ENCODE measurements at regions of chr12 and their contacts with region 1.

Region 1: GRCh38 chr12:2291182-2291832 is 238.5 kb downstream of the CACNA1C start:
- DNase-seq: peak in 6 of 9 donors; percentile 12 to 47 (median 26)
- ATAC-seq: no peak
- H3K4me3 ChIP-seq: no peak overlapping the region
- H3K4me3 Mint-ChIP-seq: peak overlapping the region in 1 of 10 donors; percentile 26
- H3K27ac ChIP-seq: no peak overlapping the region
- H3K27ac Mint-ChIP-seq: no peak overlapping the region
- H3K4me1 ChIP-seq: peaks cover 0 to 5% of the 10 kb centered on the region in 2 donors
- H3K4me1 Mint-ChIP-seq: peaks cover 8 to 16% (median 14%) of the 10 kb centered on the region in 7 donors
- H3K27me3 ChIP-seq: no peaks in the 10 kb centered on the region
- H3K27me3 Mint-ChIP-seq: peaks cover 0 to 25% (median 8%) of the 10 kb centered on the region in 5 donors

Region 2: DNA sequence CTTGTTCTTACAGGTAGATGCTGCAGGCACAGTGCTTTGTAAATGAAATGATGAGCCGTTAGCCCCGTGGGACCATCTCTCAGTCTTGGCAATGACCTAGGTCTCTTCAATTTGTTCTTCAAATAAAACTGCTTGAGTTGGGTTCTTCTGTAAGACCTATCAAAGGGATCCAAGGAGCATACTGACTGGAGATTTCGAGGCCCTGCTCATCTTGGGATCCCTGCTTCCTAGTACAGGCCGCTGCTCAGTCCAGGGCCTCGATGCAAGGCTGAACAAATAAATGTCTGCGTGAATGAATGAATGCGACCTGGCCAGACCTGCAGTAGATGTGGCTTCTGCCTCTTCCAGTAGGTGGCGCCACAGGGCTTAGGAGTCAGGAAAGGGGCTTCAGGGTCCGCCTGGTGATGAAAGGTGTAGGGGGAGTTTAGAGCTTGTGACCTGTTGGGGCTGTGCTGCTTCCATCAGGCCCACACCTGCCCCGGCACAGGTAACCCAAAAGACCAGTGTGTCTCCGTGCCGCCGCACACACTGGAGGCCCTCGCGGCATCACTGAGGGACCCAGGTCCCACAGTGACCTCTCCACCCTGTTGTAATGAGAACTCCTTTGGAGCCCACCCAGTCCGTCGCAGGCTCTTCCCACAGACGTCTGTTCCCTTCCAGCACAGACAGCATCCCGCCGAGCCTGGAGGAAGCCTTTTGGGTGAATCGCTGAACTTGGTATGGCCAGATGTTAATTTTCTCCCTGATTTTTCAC is 234.1 kb before region 1 on chr12:
- CTCF ChIA-PET with region 1: no interaction called
- POLR2A ChIA-PET with region 1: no interaction called
- intact Hi-C with region 1: loop called (anchors 2 to 5 kb)
- DNase-seq: peak in 1 of 9 donors; percentile 34
- ATAC-seq: no peak
- H3K4me3 ChIP-seq: no peak overlapping the region
- H3K4me3 Mint-ChIP-seq: no peak overlapping the region
- H3K27ac ChIP-seq: no peak overlapping the region
- H3K27ac Mint-ChIP-seq: no peak overlapping the region
- H3K4me1 ChIP-seq: no peaks in the 10 kb centered on the region
- H3K4me1 Mint-ChIP-seq: peaks cover 6 to 13% (median 10%) of the 10 kb centered on the region in 7 donors
- H3K27me3 ChIP-seq: no peaks in the 10 kb centered on the region
- H3K27me3 Mint-ChIP-seq: peaks cover 30 to 70% (median 37%) of the 10 kb centered on the region in 5 donors

Region 3: DNA sequence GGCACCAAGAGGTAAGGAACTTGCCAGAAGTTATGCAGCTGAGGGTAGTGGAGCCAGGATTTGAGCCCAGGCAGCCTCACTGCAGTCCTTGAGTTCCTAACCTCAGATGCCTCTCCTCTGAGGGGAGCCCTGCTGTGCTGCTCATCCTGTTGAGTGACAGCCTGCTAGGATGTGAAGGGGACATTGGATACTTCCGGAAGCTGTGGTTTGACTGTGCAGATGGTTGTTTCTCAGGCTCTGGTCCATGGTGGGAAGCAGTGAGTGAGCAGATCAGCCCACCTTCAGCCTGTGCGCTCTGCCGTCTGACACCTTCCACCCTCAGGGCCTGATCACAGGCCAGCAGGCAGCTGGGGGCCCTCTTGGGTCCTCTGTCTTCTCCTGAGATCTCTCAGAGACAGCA is 14.7 kb after region 1 on chr12:
- CTCF ChIA-PET with region 1: no interaction called
- POLR2A ChIA-PET with region 1: no interaction called
- intact Hi-C with region 1: no loop called
- DNase-seq: no peak
- ATAC-seq: peak; percentile 12
- H3K4me3 ChIP-seq: no peak overlapping the region
- H3K4me3 Mint-ChIP-seq: no peak overlapping the region
- H3K27ac ChIP-seq: no peak overlapping the region
- H3K27ac Mint-ChIP-seq: no peak overlapping the region
- H3K4me1 ChIP-seq: no peaks in the 10 kb centered on the region
- H3K4me1 Mint-ChIP-seq: peaks cover 0 to 2% (median 0%) of the 10 kb centered on the region in 7 donors
- H3K27me3 ChIP-seq: no peaks in the 10 kb centered on the region
- H3K27me3 Mint-ChIP-seq: peaks cover 0 to 7% (median 3%) of the 10 kb centered on the region in 5 donors